ENCODE measurements at regions of chr15 and their contacts with region 1.

Region 1: DNA sequence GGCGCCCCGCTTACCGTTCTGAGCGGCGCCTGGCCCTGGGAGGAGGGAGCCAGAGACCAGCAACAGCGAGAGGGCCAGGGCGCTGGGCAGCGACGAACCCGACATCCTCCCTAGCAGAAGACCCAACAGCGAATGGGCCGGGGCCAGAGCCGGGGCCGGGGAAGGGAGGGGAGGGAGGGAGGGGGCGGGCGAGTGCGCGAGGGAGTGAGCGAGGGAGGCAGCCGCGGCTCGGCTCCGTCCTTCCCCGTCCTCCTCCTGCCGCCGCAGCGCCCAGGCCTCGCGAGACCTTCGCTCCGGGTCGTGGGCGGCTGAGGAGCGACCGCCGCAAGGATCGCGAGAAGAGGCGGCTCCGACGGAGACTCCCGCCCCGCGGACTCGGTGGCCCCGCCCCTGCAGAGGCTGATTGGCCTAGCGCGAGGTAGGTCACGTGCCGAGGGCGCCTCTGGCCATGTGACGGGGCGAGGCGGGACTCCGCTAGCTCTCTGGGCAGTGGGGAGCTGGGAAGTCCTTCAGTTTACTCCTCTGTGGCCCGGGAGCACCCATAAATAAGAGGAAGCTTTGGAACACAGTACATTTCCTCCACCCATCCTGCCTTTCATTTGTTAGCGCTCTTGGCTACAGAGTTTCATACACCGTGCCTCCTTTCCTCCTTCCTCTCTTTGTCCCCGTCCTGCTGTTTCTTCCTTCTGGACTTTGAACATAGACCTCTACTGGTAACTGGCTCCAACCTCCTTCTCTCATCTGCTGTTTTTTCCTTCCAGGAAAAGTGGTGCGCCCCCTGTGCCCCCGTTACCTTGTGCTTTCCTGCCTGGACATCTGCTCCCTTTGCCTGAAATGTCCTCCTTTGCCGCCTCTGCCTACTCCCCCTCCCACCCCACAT is at the start of gene NPTN:
- DNase-seq: peak; percentile 93 to 98 (median 97)
- ATAC-seq: peak; percentile 90 to 95 (median 94)
- H3K4me3 ChIP-seq: peak within 1 kb of the TSS; percentile 68 to 76
- H3K4me3 Mint-ChIP-seq: peak within 1 kb of the TSS; percentile 83 to 92 (median 86)
- H3K27ac ChIP-seq: peak within 1 kb of the TSS; percentile 64
- H3K27ac Mint-ChIP-seq: peak within 1 kb of the TSS; percentile 89 to 94
- H3K4me1 ChIP-seq: peaks cover 12 to 24% of the 10 kb centered on the region in 2 experiments
- H3K4me1 Mint-ChIP-seq: peaks cover 46 to 61% (median 55%) of the 10 kb centered on the region in 3 donors
- H3K27me3 ChIP-seq: peaks cover 0 to 4% of the 10 kb centered on the region in 2 experiments
- H3K27me3 Mint-ChIP-seq: peaks cover 12 to 15% of the 10 kb centered on the region in 2 donors
- total RNA-seq, gene NPTN: 24.7 to 34.9 (median 33.1) TPM

Region 2: GRCh38 chr15:73560501-73561117 is 72.7 kb before region 1 on chr15:
- CTCF ChIA-PET with region 1: interaction called in 1 of 2 experiments, 27 read pairs
- POLR2A ChIA-PET with region 1: no interaction called
- DNase-seq: peak in 5 of 35 experiments; percentile 3 to 65 (median 4)
- ATAC-seq: peak in 2 of 4 experiments; percentile 43 to 62
- H3K4me3 ChIP-seq: no peak overlapping the region
- H3K4me3 Mint-ChIP-seq: no peak overlapping the region
- H3K27ac ChIP-seq: no peak overlapping the region
- H3K27ac Mint-ChIP-seq: no peak overlapping the region
- H3K4me1 ChIP-seq: no peaks in the 10 kb centered on the region
- H3K4me1 Mint-ChIP-seq: no peaks in the 10 kb centered on the region
- H3K27me3 ChIP-seq: no peaks in the 10 kb centered on the region
- H3K27me3 Mint-ChIP-seq: no peaks in the 10 kb centered on the region

Region 3: DNA sequence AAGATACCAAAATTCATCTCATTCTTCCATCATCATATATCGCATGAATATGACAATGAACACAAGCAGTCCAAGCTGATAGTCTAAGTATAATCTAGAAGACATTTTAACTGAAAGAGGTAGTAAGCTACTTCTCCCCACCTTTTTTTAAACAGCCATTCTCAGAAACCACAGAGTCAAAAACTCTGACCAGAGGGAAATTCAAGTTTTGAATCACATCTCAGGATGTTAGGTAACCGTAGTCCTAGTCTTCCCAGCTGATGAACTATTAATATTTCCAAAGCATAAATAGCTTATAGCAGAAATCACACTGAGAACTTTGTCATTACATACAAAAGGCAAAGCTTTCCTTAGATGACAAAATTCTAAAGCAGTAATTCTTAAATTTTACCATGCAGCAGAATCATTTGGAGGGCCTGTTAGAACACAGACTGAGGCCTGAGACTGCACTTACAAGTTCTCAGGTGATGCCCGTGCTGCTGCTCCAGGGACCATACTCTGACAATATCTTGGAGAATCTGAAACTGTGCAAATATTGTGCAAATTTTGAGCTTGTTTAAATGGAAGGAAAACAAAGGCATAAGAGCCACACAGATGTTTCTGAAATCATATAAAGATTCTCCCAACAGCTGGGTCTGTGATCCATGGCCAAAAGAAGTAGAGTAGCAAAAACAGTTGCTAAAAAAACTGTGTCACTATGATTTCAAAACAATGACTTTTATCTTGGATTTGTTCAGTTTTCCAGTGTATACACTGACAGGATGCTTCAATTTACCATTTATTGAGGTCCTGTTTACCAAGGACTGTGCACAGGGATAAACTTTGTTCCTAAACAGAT is 25.7 kb before region 1 on chr15:
- CTCF ChIA-PET with region 1: interaction called, 9 to 13 read pairs
- POLR2A ChIA-PET with region 1: no interaction called
- DNase-seq: no peak
- ATAC-seq: no peak
- H3K4me3 ChIP-seq: no peak overlapping the region
- H3K4me3 Mint-ChIP-seq: no peak overlapping the region
- H3K27ac ChIP-seq: no peak overlapping the region
- H3K27ac Mint-ChIP-seq: no peak overlapping the region
- H3K4me1 ChIP-seq: peaks cover 4 to 8% of the 10 kb centered on the region in 2 experiments
- H3K4me1 Mint-ChIP-seq: peaks cover 55 to 66% (median 63%) of the 10 kb centered on the region in 3 donors
- H3K27me3 ChIP-seq: no peaks in the 10 kb centered on the region
- H3K27me3 Mint-ChIP-seq: no peaks in the 10 kb centered on the region

Region 4: GRCh38 chr15:73617301-73617831 is 16.0 kb before region 1 on chr15:
- CTCF ChIA-PET with region 1: interaction called, 6 to 18 read pairs
- POLR2A ChIA-PET with region 1: interaction called, 3 to 12 read pairs
- DNase-seq: no peak
- ATAC-seq: no peak
- H3K4me3 ChIP-seq: no peak overlapping the region
- H3K4me3 Mint-ChIP-seq: no peak overlapping the region
- H3K27ac ChIP-seq: no peak overlapping the region
- H3K27ac Mint-ChIP-seq: no peak overlapping the region
- H3K4me1 ChIP-seq: peaks cover 0 to 2% of the 10 kb centered on the region in 2 experiments
- H3K4me1 Mint-ChIP-seq: peaks cover 52 to 59% (median 56%) of the 10 kb centered on the region in 3 donors
- H3K27me3 ChIP-seq: no peaks in the 10 kb centered on the region
- H3K27me3 Mint-ChIP-seq: no peaks in the 10 kb centered on the region

Region 5: GRCh38 chr15:73697033-73697467 is 63.7 kb after region 1 on chr15:
- CTCF ChIA-PET with region 1: interaction called, 3 to 26 read pairs
- POLR2A ChIA-PET with region 1: no interaction called
- DNase-seq: peak; percentile 40 to 83 (median 73)
- ATAC-seq: peak; percentile 86 to 95 (median 90)
- H3K4me3 ChIP-seq: peak overlapping the region in 1 of 2 donors; percentile 30
- H3K4me3 Mint-ChIP-seq: peak overlapping the region in 1 of 3 donors; percentile 58
- H3K27ac ChIP-seq: no peak overlapping the region
- H3K27ac Mint-ChIP-seq: peak overlapping the region in 1 of 2 donors; percentile 64
- H3K4me1 ChIP-seq: peaks cover 5 to 25% of the 10 kb centered on the region in 2 experiments
- H3K4me1 Mint-ChIP-seq: peaks cover 17 to 33% (median 22%) of the 10 kb centered on the region in 3 donors
- H3K27me3 ChIP-seq: peaks cover 2 to 61% of the 10 kb centered on the region in 2 experiments
- H3K27me3 Mint-ChIP-seq: peaks cover 52 to 64% of the 10 kb centered on the region in 2 donors

Measured in T-cell (primary cell).